ENCODE measurements at regions of chr20 and their contacts with region 1.

Region 1: DNA sequence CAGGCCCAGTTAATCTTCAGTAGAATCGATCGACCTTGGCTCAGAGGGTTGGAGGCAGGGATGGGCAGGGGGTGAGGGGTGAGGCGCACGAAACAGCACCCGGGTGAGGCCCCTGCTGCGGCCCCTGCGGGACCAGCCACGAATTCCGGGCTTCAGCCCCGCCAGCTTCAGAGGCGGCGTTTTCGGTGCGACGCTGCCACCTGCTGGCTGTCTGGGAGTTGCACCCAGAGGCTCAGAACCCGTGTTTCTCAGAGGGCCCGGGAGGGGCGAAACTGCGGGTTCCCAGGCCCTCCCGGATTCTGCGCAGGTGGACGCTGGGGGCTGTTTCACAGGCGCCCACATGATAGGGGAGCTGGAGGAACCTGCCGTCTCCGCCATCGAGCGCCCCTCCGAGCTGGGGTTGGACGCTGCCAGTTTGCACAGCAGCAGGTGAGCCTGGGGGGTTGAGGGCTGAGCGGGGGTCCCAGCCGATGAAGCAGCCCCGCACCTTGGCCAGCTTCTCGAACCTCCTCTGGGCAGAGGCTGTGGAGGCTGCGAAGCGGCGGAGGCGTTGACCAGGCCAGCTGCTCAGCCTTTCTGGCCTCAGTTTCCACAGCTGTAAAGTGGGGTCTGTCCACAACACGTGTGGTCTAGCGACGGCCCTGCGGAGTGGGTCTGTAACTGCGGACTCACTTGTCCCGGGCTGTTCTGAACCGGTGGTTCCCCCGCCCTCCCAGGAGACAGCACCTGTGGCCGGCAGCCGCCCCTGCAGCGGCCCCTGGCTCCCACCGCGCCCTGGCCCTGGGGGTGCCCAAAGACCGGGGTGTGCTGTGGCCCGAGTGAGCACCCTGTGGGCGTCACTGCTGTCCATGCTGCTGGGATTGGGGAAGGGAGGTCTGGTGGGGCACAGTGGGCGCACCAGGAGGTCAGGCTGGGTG is 2.5 kb upstream of the BHLHE23 start:
- DNase-seq: peak; percentile 60 to 79
- H3K4me3 ChIP-seq: no peak overlapping the region
- H3K27ac ChIP-seq: no peak overlapping the region
- H3K4me1 ChIP-seq: no peaks in the 10 kb centered on the region
- H3K27me3 ChIP-seq: peaks cover 49% of the 10 kb centered on the region
- CTCF ChIP-seq: peak; percentile 95

Region 2: DNA sequence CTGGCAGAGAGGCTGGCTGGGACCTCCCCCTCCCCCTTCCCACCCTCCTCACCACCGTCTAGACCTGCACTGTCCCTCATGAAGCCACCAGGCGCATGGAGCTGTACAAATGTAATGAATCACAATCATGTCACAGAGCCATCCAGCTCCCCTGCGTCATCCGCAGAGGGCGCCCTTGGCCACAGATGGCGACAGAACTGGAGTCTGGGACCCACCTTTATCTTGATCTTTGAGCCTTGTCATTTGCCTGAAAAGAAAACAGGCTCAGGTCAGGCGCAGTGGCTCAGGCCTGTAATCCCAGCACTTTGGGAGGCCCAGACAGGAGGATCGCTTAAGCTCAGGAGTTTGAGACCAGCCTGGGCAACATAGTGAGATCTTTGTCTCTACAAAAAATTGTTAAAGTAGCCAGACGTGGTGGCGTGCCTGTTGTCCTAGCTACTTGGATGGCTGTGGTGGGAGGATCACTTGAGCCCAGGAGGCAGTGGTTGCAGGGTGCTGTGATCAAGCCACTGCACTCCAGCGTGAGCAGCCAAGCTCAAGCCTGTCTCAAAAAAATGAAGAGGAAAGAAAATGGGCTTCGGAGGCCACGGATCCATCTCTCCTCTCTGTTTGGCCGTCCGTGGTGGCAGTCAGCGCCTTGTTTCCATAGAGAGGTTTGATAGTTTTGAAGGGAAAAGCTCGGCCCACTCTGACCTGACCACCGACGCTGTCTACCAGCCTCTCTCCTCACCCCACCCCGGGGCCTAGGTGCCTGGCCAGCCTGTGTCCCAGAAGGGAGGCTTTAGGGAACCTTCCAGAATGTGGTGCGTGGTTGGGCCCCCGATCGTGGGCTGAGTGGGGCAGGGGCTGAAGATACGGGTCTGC is 186.3 kb before region 1 on chr20:
- CTCF ChIA-PET with region 1: no interaction called
- POLR2A ChIA-PET with region 1: interaction called, 5 read pairs
- intact Hi-C with region 1: loop called (anchors 1 kb)
- DNase-seq: peak; percentile 80 to 87
- H3K4me3 ChIP-seq: no peak overlapping the region
- H3K27ac ChIP-seq: no peak overlapping the region
- H3K4me1 ChIP-seq: peaks cover 36% of the 10 kb centered on the region
- H3K27me3 ChIP-seq: no peaks in the 10 kb centered on the region
- CTCF ChIP-seq: peak; percentile 79

Region 3: DNA sequence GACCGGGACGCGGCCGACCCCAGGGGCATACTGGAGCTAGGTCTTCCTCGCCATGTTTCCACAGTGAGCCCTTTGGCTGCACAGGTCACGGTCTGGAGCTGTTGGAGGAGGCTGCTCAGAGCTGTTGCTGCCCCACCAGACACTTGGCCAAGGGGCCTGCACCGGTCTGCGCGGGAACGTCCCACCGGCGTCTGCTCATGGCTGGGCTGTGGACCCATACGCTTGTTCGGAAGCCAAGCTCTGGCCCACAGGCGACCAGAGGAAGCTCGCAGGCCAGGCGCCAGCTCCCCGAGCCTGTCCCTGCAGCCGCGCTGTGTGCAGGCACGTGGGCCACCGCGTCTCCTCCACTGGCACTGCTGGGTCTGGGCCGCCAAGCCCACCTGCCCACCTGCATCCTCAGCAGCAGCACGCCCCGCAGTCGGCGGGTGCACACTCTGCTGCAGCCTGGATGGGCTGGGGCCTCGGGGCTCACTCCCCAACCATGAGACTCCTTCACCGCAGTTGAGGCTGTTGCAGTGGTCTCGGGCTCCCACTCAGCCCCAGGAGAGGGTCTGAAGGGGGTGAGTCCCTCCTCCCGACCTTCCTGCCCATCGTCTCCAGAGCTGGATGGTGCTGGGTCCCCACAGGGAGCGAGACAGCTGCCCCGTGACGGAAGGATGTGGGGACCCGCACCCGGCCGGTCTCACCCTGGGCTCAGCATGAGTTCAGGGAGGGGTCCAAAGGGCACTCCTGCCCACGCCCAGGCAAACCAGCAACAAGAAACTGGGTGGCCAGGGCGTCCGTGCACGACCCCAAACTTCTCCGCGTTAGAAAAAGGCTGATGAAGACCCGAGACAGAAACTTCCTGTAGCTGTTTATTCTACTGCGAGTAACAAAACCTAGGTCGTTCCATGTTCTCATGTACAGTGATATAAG is 132.1 kb before region 1 on chr20:
- CTCF ChIA-PET with region 1: no interaction called
- POLR2A ChIA-PET with region 1: no interaction called
- intact Hi-C with region 1: loop called (anchors 2 kb)
- DNase-seq: peak in 1 of 2 experiments; percentile 10
- H3K4me3 ChIP-seq: no peak overlapping the region
- H3K27ac ChIP-seq: no peak overlapping the region
- H3K4me1 ChIP-seq: peaks cover 9% of the 10 kb centered on the region
- H3K27me3 ChIP-seq: no peaks in the 10 kb centered on the region
- CTCF ChIP-seq: no peak